Right ventricle myocardium inferior (tissue), 1 donor: ENCODE measurements at regions of chr17 and their contacts with region 1.

Region 1: DNA sequence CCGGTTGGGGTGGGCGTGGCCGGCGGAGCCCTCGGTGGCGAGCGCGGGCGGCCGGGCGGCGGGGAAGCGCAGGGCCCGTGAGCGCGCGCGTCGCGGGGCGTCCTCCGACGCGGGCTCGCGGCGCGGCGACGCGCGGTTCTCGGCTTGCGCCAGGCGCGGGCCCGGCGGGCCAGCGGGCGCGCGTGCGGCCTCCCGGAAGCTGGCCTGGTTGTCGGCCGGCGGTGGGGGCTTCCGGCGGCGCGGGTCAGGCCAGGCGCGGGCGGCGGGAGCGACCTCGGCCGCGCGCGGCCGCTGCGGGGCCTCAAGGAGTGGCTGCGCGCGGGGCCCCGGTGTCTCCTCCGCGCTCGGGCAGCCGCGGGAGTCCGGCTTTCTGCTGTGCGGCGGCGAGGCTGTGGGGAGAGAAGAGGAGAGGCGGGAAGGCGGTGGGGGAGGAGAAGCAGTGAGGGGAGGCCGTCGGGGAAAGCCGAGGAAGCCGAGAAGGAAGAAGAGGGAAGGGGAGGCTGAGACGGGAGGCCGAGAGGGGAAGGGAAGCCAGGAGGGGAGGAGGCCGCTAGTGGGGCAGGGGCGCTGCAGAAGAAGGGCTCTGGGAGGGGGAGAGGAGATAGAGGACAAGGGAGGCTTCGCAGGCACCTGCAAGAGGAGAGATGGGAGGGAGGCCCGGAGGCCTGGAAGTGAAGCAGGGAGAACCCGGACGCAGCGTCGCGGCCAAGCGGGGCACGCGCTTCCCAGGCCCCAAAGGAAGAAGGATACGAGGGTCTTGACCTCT is 2.5 kb downstream of the C17orf58 start:
- DNase-seq: peak; percentile 91
- ATAC-seq: peak; percentile 83

Region 2: DNA sequence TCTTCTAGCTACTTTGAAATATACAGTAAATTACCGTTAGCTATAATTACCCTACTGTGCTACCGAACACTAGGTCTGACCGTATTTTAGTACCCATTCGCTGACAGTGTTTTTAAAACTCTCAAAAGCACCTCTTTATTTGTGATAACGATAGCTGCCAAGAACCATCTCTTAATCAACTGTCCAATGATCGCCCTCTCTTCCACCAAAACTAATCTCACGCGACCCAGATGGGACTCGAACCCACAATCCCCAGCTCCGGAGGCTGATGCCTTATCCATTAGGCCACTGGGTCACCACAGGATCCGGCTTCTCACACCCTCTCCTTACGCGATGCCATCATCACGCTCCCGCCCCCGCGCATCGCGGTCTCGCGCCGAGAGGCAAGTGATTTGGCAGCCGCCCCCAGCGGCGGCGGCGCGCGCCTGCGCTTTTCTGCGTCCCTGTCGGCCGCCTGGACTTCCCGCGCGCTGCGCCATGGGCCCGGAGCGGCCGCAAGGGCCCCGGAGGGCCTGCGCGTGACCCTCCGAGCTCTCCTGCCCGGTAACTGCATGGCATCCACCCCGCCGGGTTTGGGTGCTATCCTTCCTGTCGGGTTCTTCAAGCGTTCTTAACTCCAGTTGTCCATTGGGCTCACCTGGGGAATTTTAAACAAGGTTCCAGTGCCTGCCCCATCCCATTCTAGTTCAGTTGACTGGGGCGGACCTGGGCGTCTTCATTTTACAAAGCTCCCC is 26.1 kb after region 1 on chr17:
- intact Hi-C with region 1: loop called (anchors 1 kb)
- DNase-seq: peak; percentile 95
- ATAC-seq: peak; percentile 98